Panc1 (cell line): ENCODE measurements at regions of chr3 and their contacts with region 1.

Region 1: GRCh38 chr3:113575206-113575605 is 42.9 kb downstream of the SIDT1 start:
- DNase-seq: no peak
- ATAC-seq: no peak
- H3K4me3 ChIP-seq: no peak overlapping the region
- H3K27ac ChIP-seq: no peak overlapping the region
- H3K4me1 ChIP-seq: no peaks in the 10 kb centered on the region
- H3K27me3 ChIP-seq: peaks cover 29% of the 10 kb centered on the region
- CTCF ChIP-seq: no peak

Region 2: GRCh38 chr3:113051302-113051711 is 523.9 kb before region 1 on chr3:
- CTCF ChIA-PET with region 1: no interaction called
- POLR2A ChIA-PET with region 1: no interaction called
- in situ Hi-C with region 1: no loop called
- intact Hi-C with region 1: loop called (anchors 5 kb)
- DNase-seq: peak; percentile 69
- ATAC-seq: peak; percentile 97
- H3K4me3 ChIP-seq: no peak overlapping the region
- H3K27ac ChIP-seq: no peak overlapping the region
- H3K4me1 ChIP-seq: no peaks in the 10 kb centered on the region
- H3K27me3 ChIP-seq: peaks cover 5% of the 10 kb centered on the region
- CTCF ChIP-seq: peak; percentile 96

Region 3: DNA sequence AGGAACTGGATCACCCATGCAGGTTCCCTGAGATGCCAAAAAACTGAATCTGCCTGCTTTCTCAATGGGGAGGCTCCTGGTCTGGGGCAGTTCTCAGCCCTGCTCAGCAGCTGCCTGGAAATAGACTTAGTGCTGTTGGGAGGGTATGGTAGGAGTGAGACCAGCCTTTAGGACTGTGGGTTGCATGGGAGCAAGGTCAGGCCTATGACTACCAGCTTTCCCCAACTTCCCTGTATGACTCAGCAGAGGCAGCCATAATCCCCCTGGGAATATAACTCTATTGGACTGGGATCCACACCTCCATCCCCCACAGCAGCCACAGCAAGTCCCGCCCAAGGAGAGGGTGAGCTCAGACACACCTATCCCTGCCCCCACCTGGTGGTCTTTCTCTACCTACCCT is 220.9 kb before region 1 on chr3:
- CTCF ChIA-PET with region 1: no interaction called
- POLR2A ChIA-PET with region 1: no interaction called
- in situ Hi-C with region 1: no loop called
- intact Hi-C with region 1: no loop called
- DNase-seq: no peak
- ATAC-seq: no peak
- H3K4me3 ChIP-seq: no peak overlapping the region
- H3K27ac ChIP-seq: no peak overlapping the region
- H3K4me1 ChIP-seq: no peaks in the 10 kb centered on the region
- H3K27me3 ChIP-seq: no peaks in the 10 kb centered on the region
- CTCF ChIP-seq: no peak

Region 4: GRCh38 chr3:113535898-113536297 is 39.3 kb before region 1 on chr3:
- CTCF ChIA-PET with region 1: no interaction called
- POLR2A ChIA-PET with region 1: no interaction called
- in situ Hi-C with region 1: no loop called
- intact Hi-C with region 1: loop called (anchors 5 kb)
- DNase-seq: no peak
- ATAC-seq: no peak
- H3K4me3 ChIP-seq: no peak overlapping the region
- H3K27ac ChIP-seq: no peak overlapping the region
- H3K4me1 ChIP-seq: peaks cover 10% of the 10 kb centered on the region
- H3K27me3 ChIP-seq: peaks cover 56% of the 10 kb centered on the region
- CTCF ChIP-seq: peak; percentile 64

Region 5: DNA sequence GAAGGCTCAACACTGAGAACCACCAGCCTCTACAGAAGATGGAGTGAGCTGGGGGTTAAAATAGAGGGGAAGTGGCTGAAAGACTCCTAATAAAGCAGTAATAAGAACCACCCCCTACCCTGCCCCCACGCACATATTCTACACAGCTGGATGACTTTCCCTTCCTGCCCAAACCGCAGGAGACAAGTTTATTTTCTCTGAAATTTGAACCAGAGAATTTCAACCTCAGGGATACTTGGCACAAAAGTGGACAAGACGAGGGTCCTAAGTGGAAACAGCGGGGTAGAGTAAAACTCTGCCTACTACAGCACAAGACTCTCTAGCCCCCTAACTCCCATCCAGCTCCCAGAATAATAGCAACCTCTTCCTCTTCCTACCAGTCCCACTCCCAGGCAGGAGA is 92.8 kb after region 1 on chr3:
- CTCF ChIA-PET with region 1: no interaction called
- POLR2A ChIA-PET with region 1: interaction called, 13 read pairs
- in situ Hi-C with region 1: no loop called
- intact Hi-C with region 1: no loop called
- DNase-seq: no peak
- ATAC-seq: no peak
- H3K4me3 ChIP-seq: no peak overlapping the region
- H3K27ac ChIP-seq: no peak overlapping the region
- H3K4me1 ChIP-seq: no peaks in the 10 kb centered on the region
- H3K27me3 ChIP-seq: no peaks in the 10 kb centered on the region
- CTCF ChIP-seq: no peak